Testis (tissue), 5 donors: ENCODE measurements at regions of chr6 and their contacts with region 1.

Region 1: GRCh38 chr6:71533939-71534379 is 245.3 kb downstream of the OGFRL1 start:
- DNase-seq: no peak
- H3K4me3 ChIP-seq: no peak overlapping the region
- H3K27ac ChIP-seq: no peak overlapping the region
- H3K4me1 ChIP-seq: no peaks in the 10 kb centered on the region
- H3K27me3 ChIP-seq: no peaks in the 10 kb centered on the region
- CTCF ChIP-seq: peak in 2 of 3 experiments; percentile 21 to 70
- POLR2A ChIP-seq: no peak

Region 2: DNA sequence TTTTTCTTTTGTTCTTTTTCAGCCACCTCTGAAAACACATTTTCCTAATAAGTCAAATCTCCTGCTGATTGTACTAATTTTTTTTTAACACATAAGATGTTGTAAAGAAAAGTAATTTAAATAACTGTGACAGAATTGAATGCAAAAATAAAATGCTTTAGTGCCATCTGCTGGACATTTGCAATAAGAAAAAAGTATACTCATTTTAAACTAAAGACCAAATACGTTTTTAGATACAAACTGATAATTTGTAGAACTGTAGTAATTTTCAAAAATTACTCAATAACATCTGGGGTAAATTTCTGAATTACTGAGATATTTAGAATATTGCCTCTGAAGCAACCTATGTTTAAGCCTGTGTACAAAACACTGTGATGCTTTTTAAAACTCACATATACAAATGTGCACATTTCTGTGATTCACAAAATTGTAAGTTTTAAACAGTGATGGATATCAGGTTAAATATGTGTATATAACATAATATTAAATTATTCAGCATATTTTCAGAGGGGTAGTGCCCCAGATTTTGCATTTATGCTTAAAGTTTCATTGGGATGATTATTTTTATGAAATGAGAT is 551.1 kb after region 1 on chr6:
- intact Hi-C with region 1: loop called (anchors 10 kb)
- DNase-seq: no peak
- H3K4me3 ChIP-seq: no peak overlapping the region
- H3K27ac ChIP-seq: no peak overlapping the region
- H3K4me1 ChIP-seq: no peaks in the 10 kb centered on the region
- H3K27me3 ChIP-seq: no peaks in the 10 kb centered on the region
- CTCF ChIP-seq: peak in 2 of 3 experiments; percentile 30 to 48
- POLR2A ChIP-seq: no peak